ENCODE measurements at regions of chr13 and their contacts with region 1.

Region 1: DNA sequence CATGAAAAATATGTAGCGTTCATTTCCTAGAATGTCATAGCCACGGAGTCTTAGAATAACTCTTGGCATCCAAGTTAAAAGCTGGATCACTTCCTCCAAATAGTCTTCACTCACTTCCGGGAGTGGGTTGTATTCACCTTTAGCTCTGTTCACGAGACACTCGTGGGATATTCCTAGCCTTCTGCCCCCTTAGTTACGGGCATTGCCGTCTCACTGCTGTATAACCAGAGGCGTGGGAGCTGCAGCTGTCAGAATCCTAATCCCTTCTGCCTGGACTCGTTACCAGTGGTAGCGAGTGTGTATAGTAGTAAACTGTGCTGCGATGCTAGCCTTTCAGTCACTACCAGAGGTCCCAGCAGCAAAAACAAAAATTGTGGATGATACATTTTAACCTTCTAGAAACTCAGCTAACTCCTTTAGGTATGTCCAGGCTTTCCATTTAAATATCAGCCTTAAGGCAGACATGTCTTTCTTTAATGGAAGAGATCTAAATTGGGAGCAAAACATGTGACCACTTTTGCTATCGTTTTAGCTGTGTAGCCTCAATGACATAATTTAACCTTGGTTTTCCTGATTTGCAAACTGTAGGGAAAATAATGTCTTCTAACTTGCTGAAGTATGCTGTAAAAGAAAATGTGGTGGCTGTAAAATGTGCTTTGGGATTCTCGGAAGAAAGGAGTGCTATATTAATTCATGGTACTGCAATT is 34.1 kb downstream of the ERCC5 start:
- DNase-seq: peak in 1 of 5 donors; percentile 35
- ATAC-seq: peak; percentile 36 to 82 (median 64)
- H3K4me3 ChIP-seq: peak overlapping the region in 11 of 12 donors; percentile 4 to 40 (median 25)
- H3K27ac ChIP-seq: peak overlapping the region in 11 of 12 donors; percentile 3 to 85 (median 71)
- H3K4me1 ChIP-seq: peaks cover 0 to 24% (median 6%) of the 10 kb centered on the region in 12 donors
- H3K27me3 ChIP-seq: no peaks in the 10 kb centered on the region
- CTCF ChIP-seq: no peak
- POLR2A ChIP-seq: no peak

Region 2: DNA sequence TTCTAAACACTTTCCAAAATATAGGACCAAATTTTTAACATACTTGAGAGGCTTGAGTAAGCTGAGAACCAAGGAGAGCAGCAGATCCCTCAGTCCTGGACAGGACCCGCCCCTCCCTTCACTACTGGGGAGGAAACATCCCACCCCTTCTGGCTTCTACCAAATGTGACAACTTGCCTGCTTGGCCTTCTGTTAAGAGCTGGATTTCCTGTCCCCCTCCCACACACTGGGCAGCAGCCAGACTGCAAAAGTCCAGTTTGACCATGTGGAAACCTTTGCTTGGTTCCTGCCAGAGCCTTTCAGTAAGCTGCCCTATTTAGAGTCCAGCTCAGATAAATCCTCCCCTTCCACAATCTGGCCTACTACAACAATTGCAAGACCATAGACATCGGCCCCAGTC is 562.4 kb before region 1 on chr13:
- intact Hi-C with region 1: no loop called
- DNase-seq: peak; percentile 83 to 90 (median 89)
- ATAC-seq: peak; percentile 87 to 98 (median 97)
- H3K4me3 ChIP-seq: no peak overlapping the region
- H3K27ac ChIP-seq: peak overlapping the region in 8 of 12 donors; percentile 46 to 78 (median 60)
- H3K4me1 ChIP-seq: peaks cover 0 to 33% (median 15%) of the 10 kb centered on the region in 12 donors
- H3K27me3 ChIP-seq: no peaks in the 10 kb centered on the region
- CTCF ChIP-seq: no peak
- POLR2A ChIP-seq: no peak

Region 3: DNA sequence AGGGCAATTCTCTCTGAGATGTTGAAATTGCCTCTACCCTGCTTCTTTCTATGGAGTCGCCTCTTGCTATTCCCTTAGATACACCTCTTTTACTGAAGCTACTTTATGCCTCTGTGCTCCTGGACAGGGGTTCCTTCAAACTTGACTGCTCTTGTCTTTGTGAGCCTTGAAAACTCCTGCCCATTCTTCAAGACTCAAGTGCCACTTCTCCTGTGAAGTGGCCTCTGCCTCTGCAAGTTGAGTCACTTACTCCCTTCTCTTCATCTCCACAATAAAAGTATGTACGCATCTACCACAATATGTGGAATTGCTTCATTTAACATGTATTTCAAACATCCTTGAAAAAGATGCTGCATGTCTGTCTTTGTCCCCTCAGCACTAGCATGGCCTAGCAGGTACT is 349.2 kb before region 1 on chr13:
- intact Hi-C with region 1: no loop called
- DNase-seq: no peak
- ATAC-seq: no peak
- H3K4me3 ChIP-seq: no peak overlapping the region
- H3K27ac ChIP-seq: no peak overlapping the region
- H3K4me1 ChIP-seq: no peaks in the 10 kb centered on the region
- H3K27me3 ChIP-seq: no peaks in the 10 kb centered on the region
- CTCF ChIP-seq: no peak
- POLR2A ChIP-seq: no peak

Region 4: DNA sequence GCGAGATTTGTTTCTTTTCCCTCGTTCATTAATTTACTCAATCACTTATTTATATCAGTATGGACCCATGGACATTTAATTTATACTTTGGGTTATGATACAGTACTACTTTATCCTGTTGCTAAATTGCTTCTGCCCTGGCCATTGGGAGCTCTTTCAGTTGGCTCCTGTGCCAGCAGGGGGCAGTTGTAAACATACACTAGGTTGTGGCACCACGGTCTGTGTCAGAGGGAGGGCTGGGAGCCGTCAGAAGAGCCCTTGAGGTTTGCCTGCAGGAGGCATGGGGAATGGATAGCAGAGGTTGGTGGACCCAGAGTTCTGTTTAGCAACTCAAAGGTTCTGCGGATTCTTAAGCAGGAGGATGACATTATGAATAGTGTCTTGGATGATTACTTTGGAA is 60.2 kb after region 1 on chr13:
- intact Hi-C with region 1: loop called in 1 of 10 experiments (anchors 2 kb)
- DNase-seq: no peak
- ATAC-seq: no peak
- H3K4me3 ChIP-seq: no peak overlapping the region
- H3K27ac ChIP-seq: no peak overlapping the region
- H3K4me1 ChIP-seq: no peaks in the 10 kb centered on the region
- H3K27me3 ChIP-seq: peaks cover 0 to 4% (median 0%) of the 10 kb centered on the region in 9 donors
- CTCF ChIP-seq: no peak
- POLR2A ChIP-seq: no peak

Region 5: GRCh38 chr13:103656311-103656710 is 776.4 kb after region 1 on chr13:
- intact Hi-C with region 1: no loop called
- DNase-seq: no peak
- ATAC-seq: no peak
- H3K4me3 ChIP-seq: no peak overlapping the region
- H3K27ac ChIP-seq: no peak overlapping the region
- H3K4me1 ChIP-seq: no peaks in the 10 kb centered on the region
- H3K27me3 ChIP-seq: no peaks in the 10 kb centered on the region
- CTCF ChIP-seq: no peak
- POLR2A ChIP-seq: no peak

Measured in heart left ventricle (tissue), 16 donors.